Stomach (tissue), 19 donors: ENCODE measurements at regions of chr5 and their contacts with region 1.

Region 1: DNA sequence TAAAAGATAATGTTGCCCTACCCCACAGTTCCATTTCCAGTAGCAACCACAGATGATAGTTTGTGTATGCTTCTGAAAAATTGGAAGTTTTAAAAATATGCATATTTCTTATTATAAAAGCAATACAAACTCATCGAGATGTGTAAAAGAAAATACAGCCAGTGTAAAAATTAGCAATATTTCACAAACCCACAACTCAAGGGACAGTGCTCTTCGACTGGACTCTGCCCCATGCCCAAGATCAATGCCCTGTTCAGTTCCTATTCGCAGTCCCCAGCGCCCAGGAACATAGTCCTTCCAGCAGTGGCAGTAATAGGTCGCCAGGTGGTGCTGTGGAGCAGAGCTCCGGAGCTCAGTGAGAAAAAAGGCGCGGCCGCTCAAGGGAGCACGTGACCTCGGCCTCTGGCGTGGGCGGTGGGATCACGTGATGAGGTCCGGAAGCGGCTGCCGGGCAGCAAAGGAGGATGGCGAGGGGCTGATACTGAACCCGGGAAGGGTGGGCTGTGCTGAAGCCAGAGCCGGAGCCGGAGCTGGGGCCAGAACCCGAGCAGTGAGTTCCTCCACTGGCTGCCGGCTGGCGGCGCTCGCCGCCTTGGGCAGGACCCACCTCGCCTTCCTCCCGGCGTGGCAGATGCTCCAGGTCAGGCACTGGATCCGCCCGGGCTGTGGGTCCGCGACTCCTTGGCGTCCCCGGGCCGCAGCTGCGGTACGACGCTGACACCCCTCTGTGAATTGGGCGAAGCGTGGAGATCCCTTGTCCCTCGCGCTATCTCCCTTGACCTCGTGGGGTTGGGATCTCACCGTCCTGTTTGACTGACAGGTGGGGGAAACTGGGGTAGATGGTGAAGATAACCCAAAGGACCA is at the start of gene SLC36A1:
- DNase-seq: peak; percentile 96 to 97
- H3K4me3 ChIP-seq: peak within 1 kb of the TSS; percentile 78 to 80 (median 79)
- H3K27ac ChIP-seq: peak within 1 kb of the TSS; percentile 72 to 83 (median 74)
- H3K4me1 ChIP-seq: peaks cover 5 to 36% (median 19%) of the 10 kb centered on the region in 4 donors
- H3K27me3 ChIP-seq: no peaks in the 10 kb centered on the region
- CTCF ChIP-seq: peak in 5 of 7 experiments; percentile 94 to 99 (median 97)
- EP300 ChIP-seq: no peak
- POLR2A ChIP-seq: no peak
- total RNA-seq, gene SLC36A1: 2.3 to 27.8 (median 11.9) TPM

Region 2: DNA sequence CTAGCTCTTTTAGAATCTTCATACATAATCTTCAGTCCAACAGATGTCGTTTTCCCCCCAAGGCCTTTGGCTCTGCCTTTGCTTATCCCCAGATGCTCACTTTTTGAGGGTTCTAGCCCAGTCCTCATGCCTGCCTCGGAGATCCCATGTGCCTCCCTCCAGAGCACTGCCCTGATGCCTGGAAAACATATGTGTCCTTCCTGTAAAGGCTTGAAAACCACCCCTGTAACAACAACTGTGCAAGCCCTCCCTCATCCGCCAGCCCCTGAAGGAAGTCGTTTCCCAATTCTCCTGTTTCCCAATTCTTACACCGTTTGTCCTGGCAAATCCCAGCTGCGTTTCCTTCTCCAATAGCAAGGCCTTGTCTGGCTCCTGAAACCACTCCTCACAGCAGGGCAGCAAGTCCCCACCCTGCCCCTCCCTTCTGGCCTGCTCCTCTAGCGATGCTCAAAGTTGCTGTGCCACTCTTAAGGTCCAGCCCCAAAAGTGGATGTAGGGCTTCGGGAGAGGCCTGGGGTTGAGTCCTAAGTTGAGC is 52.2 kb after region 1 on chr5:
- intact Hi-C with region 1: loop called (anchors 2 kb)
- DNase-seq: no peak
- H3K4me3 ChIP-seq: no peak overlapping the region
- H3K27ac ChIP-seq: no peak overlapping the region
- H3K4me1 ChIP-seq: peaks cover 0 to 8% (median 5%) of the 10 kb centered on the region in 4 donors
- H3K27me3 ChIP-seq: no peaks in the 10 kb centered on the region
- CTCF ChIP-seq: no peak
- EP300 ChIP-seq: no peak
- POLR2A ChIP-seq: no peak

Region 3: GRCh38 chr5:151651997-151652645 is 204.7 kb after region 1 on chr5:
- intact Hi-C with region 1: loop called (anchors 5 kb)
- DNase-seq: peak; percentile 74 to 90
- H3K4me3 ChIP-seq: no peak overlapping the region
- H3K27ac ChIP-seq: no peak overlapping the region
- H3K4me1 ChIP-seq: peaks cover 0 to 5% (median 0%) of the 10 kb centered on the region in 4 donors
- H3K27me3 ChIP-seq: peaks cover 0 to 4% (median 0%) of the 10 kb centered on the region in 3 donors
- CTCF ChIP-seq: peak in 5 of 7 experiments; percentile 68 to 72 (median 71)
- EP300 ChIP-seq: no peak
- POLR2A ChIP-seq: no peak

Region 4: GRCh38 chr5:151740336-151740942 is 293.0 kb after region 1 on chr5:
- intact Hi-C with region 1: loop called (anchors 10 kb)
- DNase-seq: peak; percentile 29 to 91
- H3K4me3 ChIP-seq: no peak overlapping the region
- H3K27ac ChIP-seq: peak overlapping the region in 4 of 5 donors; percentile 59 to 80 (median 72)
- H3K4me1 ChIP-seq: peaks cover 10 to 26% (median 18%) of the 10 kb centered on the region in 4 donors
- H3K27me3 ChIP-seq: no peaks in the 10 kb centered on the region
- CTCF ChIP-seq: peak in 5 of 7 experiments; percentile 62 to 88 (median 81)
- EP300 ChIP-seq: no peak
- POLR2A ChIP-seq: no peak